ENCODE measurements at regions of chr17 and their contacts with region 1.

Region 1: DNA sequence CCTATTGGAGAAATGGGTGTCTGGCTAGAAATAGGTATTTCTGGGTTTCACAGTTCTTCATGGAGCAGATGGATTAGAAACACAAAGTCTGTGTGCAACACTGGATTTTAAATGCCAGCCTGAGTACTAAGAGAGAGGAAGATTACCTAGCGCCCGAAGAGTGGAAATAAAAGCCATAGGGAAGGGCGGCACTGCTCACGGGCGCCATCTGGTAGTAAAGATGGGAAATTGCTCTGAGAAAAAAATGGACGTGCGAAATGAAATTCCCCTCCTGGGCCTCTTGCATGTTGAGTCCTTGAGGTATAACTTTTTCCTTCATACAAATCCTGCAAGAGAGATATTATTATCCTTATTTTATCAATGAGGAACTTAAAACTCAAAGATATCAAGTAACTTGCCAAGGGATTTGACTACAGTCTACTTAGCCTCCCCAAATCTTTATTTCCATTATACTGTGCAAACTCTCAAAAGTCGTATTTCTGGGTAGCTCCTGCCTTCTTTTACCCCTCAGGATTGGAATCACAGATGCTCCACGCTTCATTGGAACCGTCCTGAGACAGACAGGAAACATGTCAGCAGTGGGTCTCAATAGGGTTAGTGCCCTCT is 72.8 kb downstream of the MMD start:
- DNase-seq: peak; percentile 69
- ATAC-seq: peak; percentile 80
- H3K4me3 ChIP-seq: no peak overlapping the region
- H3K27ac ChIP-seq: no peak overlapping the region
- H3K4me1 ChIP-seq: peaks cover 50% of the 10 kb centered on the region
- H3K27me3 ChIP-seq: no peaks in the 10 kb centered on the region
- CTCF ChIP-seq: peak; percentile 90
- EP300 ChIP-seq: 0 out of 4 replicates have a peak, but pooled peaks of 1 of the 2 experiments have one; percentile 7
- POLR2A ChIP-seq: no peak
- RAD21 ChIP-seq: peak; percentile 84

Region 2: GRCh38 chr17:54992797-54993639 is 355.8 kb before region 1 on chr17:
- CTCF ChIA-PET with region 1: interaction called, 23 read pairs
- POLR2A ChIA-PET with region 1: no interaction called
- in situ Hi-C with region 1: no loop called
- intact Hi-C with region 1: loop called (anchors 1 kb)
- DNase-seq: peak; percentile 65
- ATAC-seq: peak; percentile 86
- H3K4me3 ChIP-seq: no peak overlapping the region
- H3K27ac ChIP-seq: no peak overlapping the region
- H3K4me1 ChIP-seq: no peaks in the 10 kb centered on the region
- H3K27me3 ChIP-seq: no peaks in the 10 kb centered on the region
- CTCF ChIP-seq: peak; percentile 74
- EP300 ChIP-seq: no peak
- POLR2A ChIP-seq: no peak
- RAD21 ChIP-seq: peak; percentile 57

Region 3: GRCh38 chr17:55053855-55054254 is 295.0 kb before region 1 on chr17:
- CTCF ChIA-PET with region 1: interaction called, 8 read pairs
- POLR2A ChIA-PET with region 1: no interaction called
- in situ Hi-C with region 1: loop called (anchors 10 kb)
- intact Hi-C with region 1: loop called (anchors 5 kb)
- DNase-seq: no peak
- ATAC-seq: no peak
- H3K4me3 ChIP-seq: no peak overlapping the region
- H3K27ac ChIP-seq: no peak overlapping the region
- H3K4me1 ChIP-seq: no peaks in the 10 kb centered on the region
- H3K27me3 ChIP-seq: no peaks in the 10 kb centered on the region
- CTCF ChIP-seq: peak; percentile 46
- EP300 ChIP-seq: no peak
- POLR2A ChIP-seq: no peak
- RAD21 ChIP-seq: peak; percentile 43; the same call in 1 of the 2 replicates

Region 4: DNA sequence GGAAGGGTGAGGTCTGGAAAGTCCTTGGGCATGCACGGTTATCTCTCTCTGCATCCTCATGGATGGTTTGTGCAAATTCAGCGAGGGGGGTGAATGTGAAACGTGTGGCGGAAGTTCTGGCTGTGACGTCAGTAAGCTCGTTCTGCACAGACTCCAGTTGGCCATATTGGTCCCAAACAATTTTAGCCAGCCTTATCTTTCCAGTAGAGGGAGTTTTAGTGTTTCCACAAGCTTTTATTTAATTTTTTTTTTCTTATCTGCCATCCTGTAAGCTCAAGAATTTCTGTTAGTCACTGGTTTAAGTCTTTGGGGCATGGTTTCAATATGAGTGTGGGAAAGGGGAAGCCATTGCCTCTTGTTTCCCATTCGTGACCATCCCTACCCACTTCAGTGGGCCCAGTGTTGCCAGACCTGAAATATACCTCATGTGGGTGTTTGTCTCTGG is 45.1 kb before region 1 on chr17:
- CTCF ChIA-PET with region 1: no interaction called
- POLR2A ChIA-PET with region 1: no interaction called
- in situ Hi-C with region 1: no loop called
- intact Hi-C with region 1: loop called (anchors 2 kb)
- DNase-seq: no peak
- ATAC-seq: no peak
- H3K4me3 ChIP-seq: no peak overlapping the region; a peak in 1 of 6 replicates
- H3K27ac ChIP-seq: peak overlapping the region; percentile 86
- H3K4me1 ChIP-seq: peaks cover 100% of the 10 kb centered on the region
- H3K27me3 ChIP-seq: no peaks in the 10 kb centered on the region
- CTCF ChIP-seq: peak; percentile 4; the same call in 1 of the 2 replicates
- EP300 ChIP-seq: no peak
- POLR2A ChIP-seq: no peak; a peak in 2 of 4 replicates
- RAD21 ChIP-seq: no peak

Region 5: DNA sequence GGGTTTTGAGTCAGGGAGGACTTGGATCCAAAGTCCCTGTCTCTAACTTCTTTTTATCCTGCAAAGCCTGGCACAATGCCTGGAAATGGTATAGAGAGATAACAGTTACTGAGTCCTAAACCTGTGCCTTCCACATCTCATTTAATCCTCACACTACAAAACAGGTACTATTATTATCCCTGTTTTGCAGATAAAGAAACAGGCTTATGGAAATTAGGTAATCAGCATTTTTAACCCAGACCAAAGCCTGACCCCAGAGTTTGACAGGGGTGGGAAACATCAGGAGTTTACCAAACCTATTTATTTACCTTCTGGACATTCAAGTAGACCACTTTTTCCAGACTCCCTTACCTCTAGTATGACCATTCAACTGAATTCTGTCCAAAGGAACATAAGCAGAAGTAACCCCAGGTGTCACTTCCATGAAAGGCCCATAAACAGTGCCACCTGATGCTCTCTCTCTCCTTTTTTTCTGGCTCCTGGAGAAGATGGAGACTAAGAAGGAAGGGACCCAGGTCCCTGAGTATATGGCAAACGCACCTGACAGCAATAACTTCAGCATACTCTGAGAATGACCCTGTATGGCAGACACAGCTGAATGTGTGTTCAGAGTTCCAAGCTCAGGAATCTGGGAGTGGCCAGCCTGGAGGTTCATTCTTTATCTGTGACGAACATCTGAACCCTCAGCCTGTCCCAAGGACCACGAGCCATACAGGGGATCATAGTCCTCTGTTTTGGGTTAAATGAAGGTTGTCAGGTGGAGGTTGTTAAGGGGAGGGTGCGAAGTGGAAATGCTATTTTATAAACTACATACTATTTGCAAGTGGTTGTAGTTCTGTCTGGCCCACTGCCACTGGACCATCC is 21.4 kb before region 1 on chr17:
- CTCF ChIA-PET with region 1: interaction called, 5 read pairs
- POLR2A ChIA-PET with region 1: no interaction called
- in situ Hi-C with region 1: no loop called
- intact Hi-C with region 1: loop called (anchors 1 kb)
- DNase-seq: peak; percentile 87
- ATAC-seq: peak; percentile 65
- H3K4me3 ChIP-seq: no peak overlapping the region
- H3K27ac ChIP-seq: peak overlapping the region; percentile 37
- H3K4me1 ChIP-seq: peaks cover 48% of the 10 kb centered on the region
- H3K27me3 ChIP-seq: no peaks in the 10 kb centered on the region
- CTCF ChIP-seq: no peak
- EP300 ChIP-seq: peak in 1 of 2 experiments; percentile 36; a peak in 1 of 4 replicates
- POLR2A ChIP-seq: peak; percentile 18 to 27; a peak in 1 of 4 replicates
- RAD21 ChIP-seq: no peak

Region 6: DNA sequence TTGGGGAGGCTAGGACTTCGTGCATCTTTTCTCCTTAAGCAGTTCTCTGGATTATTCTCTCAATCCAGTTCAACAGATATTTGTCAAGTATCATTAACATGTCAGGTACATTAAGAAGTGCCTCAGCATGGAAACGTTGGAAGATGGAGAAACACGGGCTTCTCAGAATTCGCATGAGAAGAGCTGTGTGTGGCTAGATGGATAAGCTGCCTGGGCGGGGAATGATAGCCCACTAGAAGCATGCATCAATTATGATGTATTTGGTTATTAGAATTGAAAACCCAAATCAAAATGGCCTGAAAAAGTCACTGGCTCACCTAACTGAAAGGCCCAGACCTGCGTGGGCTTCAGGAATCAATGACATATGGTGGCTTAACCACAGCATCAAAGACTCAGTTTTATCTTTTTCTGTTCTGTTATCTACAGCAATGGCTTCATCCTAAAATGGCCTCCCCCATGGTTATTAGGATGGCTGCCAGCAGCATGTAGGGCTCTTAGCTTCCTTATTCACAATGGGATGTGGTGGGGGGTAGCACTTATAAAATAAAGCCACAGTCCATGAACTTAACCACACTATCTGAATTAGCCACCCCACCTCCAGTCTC is 28.9 kb after region 1 on chr17:
- CTCF ChIA-PET with region 1: no interaction called
- POLR2A ChIA-PET with region 1: no interaction called
- in situ Hi-C with region 1: no loop called
- intact Hi-C with region 1: no loop called
- DNase-seq: no peak
- ATAC-seq: no peak
- H3K4me3 ChIP-seq: no peak overlapping the region
- H3K27ac ChIP-seq: no peak overlapping the region
- H3K4me1 ChIP-seq: peaks cover 16% of the 10 kb centered on the region
- H3K27me3 ChIP-seq: no peaks in the 10 kb centered on the region; a peak in 1 of 5 replicates
- CTCF ChIP-seq: no peak
- EP300 ChIP-seq: no peak
- POLR2A ChIP-seq: no peak
- RAD21 ChIP-seq: no peak